Posterior cingulate gyrus (tissue), 11 donors: ENCODE measurements at regions of chr9 and their contacts with region 1.

Region 1: GRCh38 chr9:96344458-96345180 is 38.9 kb downstream of the SLC35D2 start:
- DNase-seq: peak in 5 of 10 donors; percentile 22 to 90 (median 53)

Region 2: GRCh38 chr9:96020792-96021550 is 323.6 kb before region 1 on chr9:
- intact Hi-C with region 1: no loop called
- DNase-seq: peak in 5 of 10 donors; percentile 30 to 91 (median 39)

Region 3: GRCh38 chr9:96256800-96257199 is 87.8 kb before region 1 on chr9:
- intact Hi-C with region 1: no loop called
- DNase-seq: no peak

Region 4: DNA sequence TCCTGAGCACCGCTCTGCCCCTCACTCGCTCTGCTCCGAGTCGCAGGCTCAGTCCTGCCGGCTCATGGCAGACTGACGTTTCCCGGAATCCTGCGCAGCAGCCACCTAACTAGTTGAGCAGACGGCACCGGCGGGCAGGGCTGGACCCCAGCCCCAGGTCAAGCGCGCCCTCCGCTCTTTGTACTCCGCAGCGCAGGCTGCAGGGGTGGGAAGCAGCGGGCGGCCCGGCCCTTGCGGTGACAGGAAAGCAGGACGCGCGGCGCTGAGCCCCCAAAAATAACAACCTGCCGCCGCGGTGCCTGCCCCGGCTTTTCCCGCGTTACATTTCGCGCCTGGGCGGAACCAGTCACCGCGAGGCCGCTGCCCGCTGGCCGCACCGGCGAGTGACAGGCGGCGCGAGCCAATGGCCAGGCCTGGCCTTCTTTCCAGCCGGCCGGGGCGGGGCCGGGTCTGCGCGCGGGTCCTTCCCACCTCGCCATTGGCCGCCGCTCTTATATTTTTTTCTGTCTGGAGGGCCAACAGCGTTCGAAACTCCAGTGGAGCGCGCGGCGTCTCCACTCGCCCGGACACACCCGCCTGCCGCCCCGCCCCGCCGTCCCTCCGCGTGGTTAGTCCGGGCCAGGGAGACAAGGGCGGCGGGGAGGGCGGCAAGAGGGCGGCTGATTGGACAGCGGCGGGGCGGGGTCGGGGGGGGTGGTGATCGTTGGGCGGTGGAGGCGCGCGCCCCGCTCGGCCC is 73.6 kb after region 1 on chr9 and contains the start of gene ZNF367:
- intact Hi-C with region 1: loop called (anchors 5 kb)
- DNase-seq: peak; percentile 91 to 99 (median 96)

Region 5: GRCh38 chr9:96599298-96599697 is 254.7 kb after region 1 on chr9:
- intact Hi-C with region 1: no loop called
- DNase-seq: no peak